Activated CD4-positive, alpha-beta T cell treated with anti-CD3 and anti-CD28 coated beads for 36 hours (primary cell): ENCODE measurements at regions of chr12 and their contacts with region 1.

Region 1: GRCh38 chr12:50038336-50038735 is 13.0 kb upstream of the RACGAP1 start:
- DNase-seq: no peak
- ATAC-seq: no peak
- H3K4me3 Mint-ChIP-seq: no peak overlapping the region
- H3K27ac Mint-ChIP-seq: no peak overlapping the region
- H3K4me1 Mint-ChIP-seq: peaks cover 14% of the 10 kb centered on the region
- H3K27me3 Mint-ChIP-seq: peaks cover 4% of the 10 kb centered on the region

Region 2: DNA sequence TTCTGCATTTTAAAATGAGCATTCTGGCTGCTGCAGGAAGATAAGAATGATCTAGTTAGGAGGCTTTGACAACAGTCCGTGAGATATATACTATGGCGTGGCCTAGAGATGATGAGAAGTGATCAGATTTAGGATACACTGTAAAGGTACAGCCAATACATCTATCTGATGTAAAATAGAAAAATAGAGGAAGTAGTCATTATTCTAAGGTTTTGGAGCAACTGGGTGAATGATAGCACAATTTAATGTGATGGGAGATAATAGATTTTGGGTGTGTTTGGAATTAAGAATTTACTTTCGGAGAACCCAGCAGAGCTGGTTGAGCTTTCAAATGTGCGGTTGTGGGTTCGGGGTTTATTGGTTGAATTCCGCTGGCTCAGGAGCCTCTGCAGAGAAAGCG is 1566.1 kb before region 1 on chr12 and contains the start of gene ANP32D:
- CTCF ChIA-PET with region 1: no interaction called
- POLR2A ChIA-PET with region 1: no interaction called
- intact Hi-C with region 1: no loop called
- DNase-seq: no peak
- ATAC-seq: no peak
- H3K4me3 Mint-ChIP-seq: no peak within 1 kb of the TSS
- H3K27ac Mint-ChIP-seq: no peak within 1 kb of the TSS
- H3K4me1 Mint-ChIP-seq: no peaks in the 10 kb centered on the region
- H3K27me3 Mint-ChIP-seq: peaks cover 22% of the 10 kb centered on the region
- total RNA-seq, gene ANP32D: not detected

Region 3: DNA sequence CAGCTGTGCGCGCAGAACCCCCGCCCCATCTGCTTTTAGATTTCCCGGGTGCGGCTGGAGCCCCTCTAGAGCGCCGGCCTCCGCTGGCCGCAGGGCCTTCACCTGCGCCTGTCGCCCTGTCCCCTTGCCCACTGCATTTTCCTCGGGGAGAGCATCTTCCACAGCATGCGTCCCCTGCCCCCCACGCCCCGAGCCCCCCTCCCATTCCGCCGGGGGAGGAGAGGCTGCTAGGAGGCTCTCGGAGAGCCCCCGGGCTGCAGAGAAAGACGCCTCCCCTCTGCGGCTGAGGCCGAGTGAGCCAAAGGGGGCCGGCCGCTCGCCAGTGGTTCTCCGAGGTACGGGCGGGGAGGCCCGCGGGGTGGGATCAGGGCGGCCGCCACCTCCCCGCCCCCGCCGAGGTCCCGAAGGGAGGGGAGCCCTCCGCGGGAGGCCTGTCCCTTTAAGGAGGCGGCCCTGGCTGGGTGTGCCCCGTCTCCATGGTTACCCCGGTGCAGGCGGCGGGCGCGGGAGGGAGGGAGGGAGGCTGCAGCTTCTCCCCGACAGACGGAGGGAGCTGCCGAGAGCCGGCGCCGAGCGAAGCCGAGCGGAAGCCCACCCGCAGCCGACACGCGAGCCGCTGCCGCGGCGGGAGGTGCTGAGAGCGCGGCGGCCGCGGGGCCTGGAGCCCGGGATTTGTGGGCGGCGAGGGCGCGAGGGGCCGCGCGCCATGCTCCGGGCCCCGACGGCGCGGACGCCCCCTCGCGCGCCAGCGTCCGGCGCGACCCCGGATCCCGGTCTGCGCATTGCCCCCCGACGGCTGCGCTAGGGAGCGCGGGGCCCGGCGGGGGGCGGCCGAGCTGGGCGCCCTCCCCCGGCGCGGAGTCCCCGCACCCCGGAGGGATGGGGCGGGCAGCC is 499.6 kb before region 1 on chr12 and contains the start of gene KCNH3:
- CTCF ChIA-PET with region 1: no interaction called
- POLR2A ChIA-PET with region 1: no interaction called
- intact Hi-C with region 1: no loop called
- DNase-seq: peak; percentile 90
- ATAC-seq: peak; percentile 82
- H3K4me3 Mint-ChIP-seq: peak within 1 kb of the TSS; percentile 55
- H3K27ac Mint-ChIP-seq: no peak within 1 kb of the TSS
- H3K4me1 Mint-ChIP-seq: peaks cover 4% of the 10 kb centered on the region
- H3K27me3 Mint-ChIP-seq: peaks cover 17% of the 10 kb centered on the region
- total RNA-seq, gene KCNH3: 2.4 to 3.3 TPM

Region 4: GRCh38 chr12:50016501-50017475 is 21.5 kb before region 1 on chr12:
- CTCF ChIA-PET with region 1: interaction called, 18 read pairs
- POLR2A ChIA-PET with region 1: interaction called, 3 read pairs
- intact Hi-C with region 1: no loop called
- DNase-seq: no peak
- ATAC-seq: no peak
- H3K4me3 Mint-ChIP-seq: no peak overlapping the region
- H3K27ac Mint-ChIP-seq: no peak overlapping the region
- H3K4me1 Mint-ChIP-seq: peaks cover 11% of the 10 kb centered on the region
- H3K27me3 Mint-ChIP-seq: no peaks in the 10 kb centered on the region

Region 5: DNA sequence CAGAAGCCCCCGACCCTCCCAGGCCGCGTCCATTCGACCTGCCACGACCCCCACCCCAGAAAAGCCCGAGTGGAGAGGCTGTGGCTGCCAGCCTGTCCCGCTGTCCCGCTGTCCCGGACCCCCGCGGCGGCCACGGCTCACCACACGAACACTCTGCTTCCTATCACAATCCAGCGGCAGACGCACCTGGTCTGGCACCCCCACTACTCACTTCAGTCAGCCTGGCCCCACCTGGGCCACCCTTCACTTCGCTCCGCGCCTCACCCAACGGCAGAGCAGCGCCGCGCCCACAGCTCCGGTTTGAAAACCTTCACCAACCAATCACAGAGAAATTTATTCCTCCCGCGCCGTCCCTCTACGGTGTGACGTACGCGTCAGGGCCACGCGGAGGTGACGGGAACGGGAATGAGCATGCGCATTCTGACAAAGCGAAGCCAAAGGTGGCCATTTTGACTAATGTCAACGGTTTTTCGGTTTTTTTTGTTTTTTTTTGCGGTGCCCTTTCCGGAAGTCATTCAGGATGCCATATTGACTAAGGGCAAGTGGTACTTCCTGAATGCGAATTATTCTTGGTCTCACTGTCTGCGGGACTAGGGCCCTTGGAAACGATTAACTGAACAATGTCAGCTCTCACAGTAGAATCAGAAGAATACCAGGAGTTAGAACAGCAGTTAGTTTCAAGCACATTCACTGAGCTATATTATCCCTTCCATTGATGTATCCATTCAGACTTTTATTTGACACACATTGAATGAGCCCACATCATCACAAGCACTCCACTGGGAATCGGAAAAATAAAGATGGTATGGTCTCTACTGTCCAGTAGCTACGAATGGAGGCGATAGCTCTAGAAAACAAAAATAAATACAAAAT is 12.9 kb before region 1 on chr12 and contains the start of gene RACGAP1:
- CTCF ChIA-PET with region 1: interaction called, 30 read pairs
- POLR2A ChIA-PET with region 1: interaction called, 4 read pairs
- intact Hi-C with region 1: no loop called
- DNase-seq: peak; percentile 97
- ATAC-seq: peak; percentile 98
- H3K4me3 Mint-ChIP-seq: peak within 1 kb of the TSS; percentile 90
- H3K27ac Mint-ChIP-seq: peak within 1 kb of the TSS; percentile 95
- H3K4me1 Mint-ChIP-seq: peaks cover 23% of the 10 kb centered on the region
- H3K27me3 Mint-ChIP-seq: no peaks in the 10 kb centered on the region
- total RNA-seq, gene RACGAP1: 99.7 to 118 TPM

Region 6: DNA sequence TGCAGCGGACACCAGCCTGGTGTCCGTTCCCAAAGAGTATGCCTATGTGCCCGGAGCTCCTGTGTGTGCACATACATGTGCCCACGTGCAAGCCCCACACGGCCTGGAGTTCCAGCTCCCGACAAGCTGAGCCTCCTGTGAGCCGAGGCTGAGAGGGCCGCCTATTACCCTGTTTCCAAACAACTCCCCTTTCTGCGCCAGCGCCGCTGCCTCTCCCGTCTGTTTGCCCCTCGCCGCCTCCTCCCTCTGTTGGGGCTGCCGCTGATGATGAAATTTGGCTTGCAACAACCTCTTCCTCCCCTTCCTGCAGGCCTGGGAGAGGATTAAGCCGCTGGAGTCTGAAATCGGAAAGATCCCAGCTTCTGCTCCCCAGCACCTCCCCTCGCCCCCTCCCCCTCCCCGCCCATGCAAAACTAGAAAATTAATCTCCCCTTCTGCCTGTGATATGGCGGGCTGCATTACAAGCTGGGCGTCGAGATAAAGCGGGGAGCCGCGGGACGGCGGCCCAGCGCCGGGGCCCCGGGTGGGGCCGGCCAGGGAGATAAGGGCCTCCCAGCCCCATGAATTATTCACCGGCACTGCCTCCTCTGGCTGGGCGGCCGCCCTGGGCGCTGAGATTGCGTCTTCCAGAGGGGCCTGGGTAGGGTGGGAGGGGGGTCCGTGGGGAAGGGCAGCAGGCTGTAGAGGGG is 12.2 kb after region 1 on chr12:
- CTCF ChIA-PET with region 1: interaction called, 135 read pairs
- POLR2A ChIA-PET with region 1: no interaction called
- intact Hi-C with region 1: no loop called
- DNase-seq: peak; percentile 21
- ATAC-seq: no peak
- H3K4me3 Mint-ChIP-seq: no peak overlapping the region
- H3K27ac Mint-ChIP-seq: no peak overlapping the region
- H3K4me1 Mint-ChIP-seq: peaks cover 2% of the 10 kb centered on the region
- H3K27me3 Mint-ChIP-seq: peaks cover 40% of the 10 kb centered on the region

Region 7: GRCh38 chr12:50084775-50085614 is 46.7 kb after region 1 on chr12 and contains the start of gene SMARCD1:
- CTCF ChIA-PET with region 1: interaction called, 10 read pairs
- POLR2A ChIA-PET with region 1: no interaction called
- intact Hi-C with region 1: no loop called
- DNase-seq: peak; percentile 91
- ATAC-seq: peak; percentile 90
- H3K4me3 Mint-ChIP-seq: peak within 1 kb of the TSS; percentile 85
- H3K27ac Mint-ChIP-seq: peak within 1 kb of the TSS; percentile 96
- H3K4me1 Mint-ChIP-seq: peaks cover 36% of the 10 kb centered on the region
- H3K27me3 Mint-ChIP-seq: no peaks in the 10 kb centered on the region
- total RNA-seq, gene SMARCD1: 51.8 to 76.6 TPM

Region 8: GRCh38 chr12:50104417-50105366 is 66.4 kb after region 1 on chr12:
- CTCF ChIA-PET with region 1: no interaction called
- POLR2A ChIA-PET with region 1: no interaction called
- intact Hi-C with region 1: no loop called
- DNase-seq: no peak
- ATAC-seq: no peak
- H3K4me3 Mint-ChIP-seq: no peak overlapping the region
- H3K27ac Mint-ChIP-seq: no peak overlapping the region
- H3K4me1 Mint-ChIP-seq: no peaks in the 10 kb centered on the region
- H3K27me3 Mint-ChIP-seq: no peaks in the 10 kb centered on the region